Right cardiac atrium (tissue), 5 donors: ENCODE measurements at regions of chr21 and their contacts with region 1.

Region 1: DNA sequence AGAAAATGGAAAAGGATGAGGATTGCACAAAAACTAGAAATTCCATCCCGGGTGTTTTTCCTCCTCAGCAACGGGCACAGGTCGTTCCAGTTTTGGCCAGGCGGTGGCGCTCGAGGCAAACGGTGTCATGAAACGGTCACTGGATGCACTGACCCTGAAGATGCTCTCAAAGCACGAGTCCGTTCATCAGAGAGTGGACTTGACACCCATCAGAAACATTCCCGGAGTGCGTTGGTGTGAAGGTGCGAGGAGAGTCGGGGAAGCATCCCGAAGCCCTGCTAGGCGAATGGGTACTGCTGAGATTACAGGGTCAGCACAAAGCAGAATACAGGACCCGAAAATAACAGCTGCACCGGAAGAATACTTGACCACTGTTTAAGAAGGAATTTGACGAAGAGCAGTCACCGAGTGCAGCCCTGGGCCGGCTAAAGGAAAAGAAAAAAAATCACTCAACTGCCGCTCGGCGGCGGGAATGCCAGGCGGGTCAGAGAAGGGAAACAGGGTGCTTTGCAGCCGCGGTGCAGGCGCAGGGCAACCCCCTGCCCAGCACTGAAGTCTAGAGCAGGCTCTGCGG is 71.7 kb upstream of the ETS2 start:
- DNase-seq: peak; percentile 88 to 97 (median 96)
- ATAC-seq: peak; percentile 90 to 95
- H3K4me3 ChIP-seq: peak overlapping the region; percentile 9
- H3K27ac ChIP-seq: peak overlapping the region; percentile 19
- H3K4me1 ChIP-seq: no peaks in the 10 kb centered on the region
- H3K27me3 ChIP-seq: no peaks in the 10 kb centered on the region

Region 2: DNA sequence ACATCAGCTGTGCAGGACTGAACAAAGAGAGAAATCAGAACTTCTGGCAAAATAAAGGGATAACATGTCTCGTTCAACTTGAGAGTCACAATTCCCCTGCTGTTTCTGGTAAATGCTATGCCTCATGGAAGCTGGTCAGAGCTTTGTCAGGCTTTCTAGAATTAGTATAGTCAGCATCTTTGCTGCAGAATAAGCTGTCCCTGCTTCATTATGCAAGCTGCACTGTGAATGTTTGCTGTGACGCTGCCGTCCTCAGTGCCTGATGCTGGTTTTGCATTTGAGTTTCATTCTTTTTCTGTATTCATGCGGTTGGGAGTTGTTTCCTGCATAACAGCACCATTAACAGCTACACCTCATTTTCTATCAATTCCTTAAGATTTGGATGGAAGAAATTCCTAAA is 721.4 kb before region 1 on chr21:
- intact Hi-C with region 1: no loop called
- DNase-seq: no peak
- ATAC-seq: no peak
- H3K4me3 ChIP-seq: no peak overlapping the region
- H3K27ac ChIP-seq: no peak overlapping the region
- H3K4me1 ChIP-seq: no peaks in the 10 kb centered on the region
- H3K27me3 ChIP-seq: no peaks in the 10 kb centered on the region

Region 3: GRCh38 chr21:39137248-39138178 is 403.5 kb after region 1 on chr21:
- intact Hi-C with region 1: loop called in 3 of 4 experiments (anchors 5 kb)
- DNase-seq: peak in 1 of 3 donors; percentile 63
- ATAC-seq: peak; percentile 47 to 64
- H3K4me3 ChIP-seq: no peak overlapping the region
- H3K27ac ChIP-seq: no peak overlapping the region
- H3K4me1 ChIP-seq: no peaks in the 10 kb centered on the region
- H3K27me3 ChIP-seq: no peaks in the 10 kb centered on the region

Region 4: GRCh38 chr21:39144191-39144590 is 410.1 kb after region 1 on chr21:
- intact Hi-C with region 1: loop called (anchors 2 to 5 kb)
- DNase-seq: no peak
- ATAC-seq: no peak
- H3K4me3 ChIP-seq: no peak overlapping the region
- H3K27ac ChIP-seq: no peak overlapping the region
- H3K4me1 ChIP-seq: no peaks in the 10 kb centered on the region
- H3K27me3 ChIP-seq: no peaks in the 10 kb centered on the region